Activated CD4-positive, alpha-beta T cell treated with anti-CD3 and anti-CD28 coated beads, Interleukin-2, amount 10 ng/mL, durations not matched to agents 24 days and 14 days (primary cell): ENCODE measurements at regions of chr1 and their contacts with region 1.

Region 1: GRCh38 chr1:70410604-70411359 is at the start of gene CTH:
- DNase-seq: peak; percentile 98
- H3K4me3 Mint-ChIP-seq: peak within 1 kb of the TSS; percentile 94
- H3K27ac Mint-ChIP-seq: peak within 1 kb of the TSS; percentile 90
- H3K4me1 Mint-ChIP-seq: peaks cover 18% of the 10 kb centered on the region
- H3K27me3 Mint-ChIP-seq: peaks cover 3% of the 10 kb centered on the region
- total RNA-seq, gene CTH: 12.7 and 14.3 TPM in 2 replicates

Region 2: DNA sequence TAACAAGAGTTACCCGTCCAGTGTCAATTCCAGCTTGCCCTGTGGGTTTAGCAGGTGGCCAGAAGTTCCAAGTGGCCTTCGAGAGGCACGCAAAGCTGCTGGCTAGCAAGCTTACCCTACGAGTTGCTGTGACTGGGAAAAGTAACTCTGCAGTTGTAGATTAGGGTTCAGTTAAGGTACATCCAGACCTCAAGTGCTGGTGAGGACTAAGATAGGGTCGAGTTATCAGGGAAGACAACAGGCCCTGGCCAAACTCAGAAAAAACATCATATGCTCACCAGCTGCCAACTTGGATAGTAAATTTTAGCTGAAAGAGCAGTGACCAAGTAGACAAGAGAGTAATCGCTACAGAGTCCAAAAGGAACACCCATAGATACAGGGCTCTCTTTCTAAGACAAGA is 870.7 kb before region 1 on chr1:
- intact Hi-C with region 1: no loop called
- DNase-seq: no peak
- H3K4me3 Mint-ChIP-seq: no peak overlapping the region
- H3K27ac Mint-ChIP-seq: no peak overlapping the region
- H3K4me1 Mint-ChIP-seq: no peaks in the 10 kb centered on the region
- H3K27me3 Mint-ChIP-seq: no peaks in the 10 kb centered on the region

Region 3: GRCh38 chr1:70205434-70206118 is 205.2 kb before region 1 on chr1 and contains the start of gene LRRC40:
- intact Hi-C with region 1: loop called (anchors 1 kb)
- DNase-seq: peak; percentile 99
- H3K4me3 Mint-ChIP-seq: peak within 1 kb of the TSS; percentile 95
- H3K27ac Mint-ChIP-seq: peak within 1 kb of the TSS; percentile 99
- H3K4me1 Mint-ChIP-seq: peaks cover 49% of the 10 kb centered on the region
- H3K27me3 Mint-ChIP-seq: no peaks in the 10 kb centered on the region
- total RNA-seq, gene LRRC40: 23.3 and 25.3 TPM in 2 replicates

Region 4: GRCh38 chr1:70354332-70355110 is 56.3 kb before region 1 on chr1 and contains the start of gene ANKRD13C:
- intact Hi-C with region 1: loop called (anchors 1 kb)
- DNase-seq: peak; percentile 97
- H3K4me3 Mint-ChIP-seq: peak within 1 kb of the TSS; percentile 95
- H3K27ac Mint-ChIP-seq: peak within 1 kb of the TSS; percentile 97
- H3K4me1 Mint-ChIP-seq: peaks cover 25% of the 10 kb centered on the region
- H3K27me3 Mint-ChIP-seq: no peaks in the 10 kb centered on the region
- total RNA-seq, gene ANKRD13C: 22.2 and 24.6 TPM in 2 replicates

Region 5: GRCh38 chr1:70487910-70488665 is 77.3 kb after region 1 on chr1:
- intact Hi-C with region 1: no loop called
- DNase-seq: peak; percentile 71
- H3K4me3 Mint-ChIP-seq: no peak overlapping the region
- H3K27ac Mint-ChIP-seq: no peak overlapping the region
- H3K4me1 Mint-ChIP-seq: no peaks in the 10 kb centered on the region
- H3K27me3 Mint-ChIP-seq: peaks cover 19% of the 10 kb centered on the region

Region 6: GRCh38 chr1:70509996-70510876 is 99.5 kb after region 1 on chr1:
- intact Hi-C with region 1: loop called (anchors 2 kb)
- DNase-seq: no peak
- H3K4me3 Mint-ChIP-seq: no peak overlapping the region
- H3K27ac Mint-ChIP-seq: no peak overlapping the region
- H3K4me1 Mint-ChIP-seq: no peaks in the 10 kb centered on the region
- H3K27me3 Mint-ChIP-seq: peaks cover 11% of the 10 kb centered on the region

Region 7: DNA sequence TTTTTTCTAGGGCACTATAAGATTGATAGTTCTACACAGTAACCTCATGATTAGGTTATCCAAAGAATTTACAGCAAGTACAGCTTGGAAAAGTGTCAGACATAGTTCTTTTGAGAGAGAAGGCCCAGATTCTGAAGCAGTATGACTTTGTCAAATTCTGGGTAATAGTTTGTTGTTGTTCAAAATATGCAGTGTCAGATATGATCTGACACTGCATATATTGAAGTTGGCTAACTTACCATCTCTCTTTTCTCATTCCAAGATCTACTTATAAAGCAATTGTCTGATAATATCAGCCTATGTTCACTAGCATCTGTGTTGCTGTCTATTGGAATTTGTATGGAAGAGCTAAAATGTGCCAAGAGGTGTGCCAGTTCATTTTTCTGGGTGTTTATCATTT is 160.4 kb after region 1 on chr1:
- intact Hi-C with region 1: no loop called
- DNase-seq: no peak
- H3K4me3 Mint-ChIP-seq: no peak overlapping the region
- H3K27ac Mint-ChIP-seq: no peak overlapping the region
- H3K4me1 Mint-ChIP-seq: no peaks in the 10 kb centered on the region
- H3K27me3 Mint-ChIP-seq: peaks cover 2% of the 10 kb centered on the region

Region 8: DNA sequence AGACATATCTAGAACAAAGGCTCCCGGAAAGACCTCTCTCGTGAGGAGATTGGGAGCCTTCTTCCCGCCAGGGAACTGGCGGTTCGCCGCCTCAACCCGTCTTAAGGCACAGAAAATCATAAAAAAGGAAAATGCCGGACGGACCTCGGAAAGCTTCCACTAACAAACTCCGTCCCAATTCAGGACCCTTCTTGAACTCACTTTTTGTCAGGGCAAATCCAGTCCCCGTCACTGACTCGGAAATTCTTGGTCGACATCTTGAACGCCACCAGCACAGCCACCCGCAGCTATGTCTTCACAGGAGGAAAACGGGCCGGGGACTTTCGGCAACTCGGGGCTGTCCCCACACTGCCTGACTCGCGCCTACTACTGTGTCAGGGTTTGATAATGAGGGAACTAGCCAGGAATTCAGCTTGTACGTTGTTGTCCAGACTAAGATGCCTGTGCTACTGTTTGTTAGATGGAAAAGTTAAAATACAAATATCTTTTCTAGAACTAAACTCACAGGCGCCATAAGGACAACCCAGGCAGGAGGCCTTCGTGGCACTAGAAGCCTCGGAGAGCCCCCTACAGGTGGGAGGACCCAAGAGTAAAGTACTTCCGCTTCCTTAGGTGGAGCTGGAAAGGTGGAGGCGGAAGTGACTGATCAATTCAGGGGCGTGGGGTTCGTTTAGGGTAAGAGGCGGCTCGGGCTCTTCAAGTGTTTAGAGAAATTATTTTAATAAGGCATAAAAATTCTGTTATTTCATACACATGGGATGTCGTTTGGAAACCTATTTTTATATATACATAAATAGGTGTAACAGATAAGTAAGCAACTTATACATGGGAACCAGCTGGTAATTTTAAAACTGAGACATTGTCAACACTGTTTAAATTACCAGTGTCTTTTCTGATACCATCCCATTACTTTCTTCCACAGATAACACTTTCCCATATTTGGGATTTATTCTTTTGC is 670.2 kb after region 1 on chr1 and contains the start of gene ZRANB2:
- intact Hi-C with region 1: loop called (anchors 2 kb)
- DNase-seq: peak; percentile 97
- H3K4me3 Mint-ChIP-seq: peak within 1 kb of the TSS; percentile 100
- H3K27ac Mint-ChIP-seq: peak within 1 kb of the TSS; percentile 99
- H3K4me1 Mint-ChIP-seq: peaks cover 13% of the 10 kb centered on the region
- H3K27me3 Mint-ChIP-seq: peaks cover 14% of the 10 kb centered on the region
- total RNA-seq, gene ZRANB2: 150 and 154 TPM in 2 replicates